IMR-90 (cell line): ENCODE measurements at regions of chr5 and their contacts with region 1.

Region 1: GRCh38 chr5:172932313-172933017 is 26.8 kb upstream of the RPL26L1 start:
- DNase-seq: peak; percentile 78
- ATAC-seq: peak; percentile 64
- H3K4me3 ChIP-seq: no peak overlapping the region
- H3K27ac ChIP-seq: peak overlapping the region; percentile 73
- H3K4me1 ChIP-seq: peaks cover 22% of the 10 kb centered on the region
- H3K27me3 ChIP-seq: no peaks in the 10 kb centered on the region
- CTCF ChIP-seq: peak; percentile 96
- POLR2A ChIP-seq: peak; percentile 78
- RAD21 ChIP-seq: peak; percentile 98

Region 2: GRCh38 chr5:172678902-172679301 is 253.6 kb before region 1 on chr5:
- CTCF ChIA-PET with region 1: no interaction called
- POLR2A ChIA-PET with region 1: no interaction called
- dilution Hi-C with region 1: no loop called
- in situ Hi-C with region 1: no loop called
- intact Hi-C with region 1: no loop called
- DNase-seq: no peak
- ATAC-seq: no peak
- H3K4me3 ChIP-seq: no peak overlapping the region
- H3K27ac ChIP-seq: no peak overlapping the region
- H3K4me1 ChIP-seq: peaks cover 2% of the 10 kb centered on the region; the same call in 1 of the 2 replicates
- H3K27me3 ChIP-seq: no peaks in the 10 kb centered on the region
- CTCF ChIP-seq: no peak
- POLR2A ChIP-seq: no peak
- RAD21 ChIP-seq: no peak

Region 3: GRCh38 chr5:172689801-172690200 is 242.7 kb before region 1 on chr5:
- CTCF ChIA-PET with region 1: no interaction called
- POLR2A ChIA-PET with region 1: no interaction called
- dilution Hi-C with region 1: no loop called
- in situ Hi-C with region 1: no loop called
- intact Hi-C with region 1: no loop called
- DNase-seq: no peak
- ATAC-seq: no peak
- H3K4me3 ChIP-seq: no peak overlapping the region
- H3K27ac ChIP-seq: no peak overlapping the region
- H3K4me1 ChIP-seq: peaks cover 5% of the 10 kb centered on the region; the same call in 1 of the 2 replicates
- H3K27me3 ChIP-seq: no peaks in the 10 kb centered on the region
- CTCF ChIP-seq: no peak
- POLR2A ChIP-seq: no peak
- RAD21 ChIP-seq: no peak

Region 4: DNA sequence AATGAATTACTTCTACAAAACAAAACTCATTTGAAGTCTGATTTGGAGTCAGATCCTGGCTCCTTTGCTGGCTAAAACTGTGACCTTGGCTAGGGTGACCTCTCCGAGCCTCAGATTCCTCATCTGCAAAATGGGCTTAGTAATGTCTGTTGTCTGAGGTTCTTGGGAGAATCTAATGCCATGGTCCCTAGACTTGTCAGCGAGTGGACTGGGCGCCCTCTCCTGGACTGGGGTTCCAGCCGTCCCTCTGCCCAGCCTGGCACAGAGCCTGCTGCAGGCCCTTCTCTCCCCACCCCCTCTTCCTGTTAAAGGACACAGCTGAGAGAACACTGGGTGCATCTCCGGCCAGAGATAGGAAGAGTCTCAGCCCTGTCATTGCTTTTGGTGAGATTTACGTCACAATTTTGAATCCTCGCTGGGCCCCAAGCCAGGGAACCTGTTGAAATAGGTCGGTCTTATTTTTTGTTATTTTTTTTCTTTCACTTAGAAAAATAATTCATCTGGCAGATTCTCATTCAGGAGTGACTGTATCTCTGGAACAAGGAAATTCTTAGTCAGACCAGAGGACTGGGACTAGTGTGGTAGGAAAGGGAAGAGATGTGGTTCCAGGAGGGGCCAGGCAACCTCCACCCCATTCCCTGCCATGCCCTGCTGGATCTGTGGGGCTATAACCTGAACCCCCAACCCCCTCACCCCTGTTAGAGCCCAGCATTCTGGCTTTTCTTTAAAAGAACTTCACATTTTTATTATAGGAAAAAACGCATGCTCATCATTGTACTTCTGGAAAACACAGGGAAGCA is 21.4 kb before region 1 on chr5:
- CTCF ChIA-PET with region 1: interaction called, 8 read pairs
- POLR2A ChIA-PET with region 1: no interaction called
- dilution Hi-C with region 1: no loop called
- in situ Hi-C with region 1: no loop called
- intact Hi-C with region 1: loop called (anchors 1 kb)
- DNase-seq: peak; percentile 96
- ATAC-seq: peak; percentile 27
- H3K4me3 ChIP-seq: no peak overlapping the region
- H3K27ac ChIP-seq: peak overlapping the region; percentile 91
- H3K4me1 ChIP-seq: peaks cover 31% of the 10 kb centered on the region
- H3K27me3 ChIP-seq: no peaks in the 10 kb centered on the region
- CTCF ChIP-seq: peak; percentile 53
- POLR2A ChIP-seq: peak; percentile 60
- RAD21 ChIP-seq: peak; percentile 63

Region 5: GRCh38 chr5:173412566-173412965 is 480.1 kb after region 1 on chr5:
- CTCF ChIA-PET with region 1: no interaction called
- POLR2A ChIA-PET with region 1: no interaction called
- dilution Hi-C with region 1: no loop called
- in situ Hi-C with region 1: no loop called
- intact Hi-C with region 1: no loop called
- DNase-seq: peak; percentile 66
- ATAC-seq: peak; percentile 77
- H3K4me3 ChIP-seq: no peak overlapping the region
- H3K27ac ChIP-seq: no peak overlapping the region
- H3K4me1 ChIP-seq: peaks cover 13% of the 10 kb centered on the region
- H3K27me3 ChIP-seq: no peaks in the 10 kb centered on the region
- CTCF ChIP-seq: no peak
- POLR2A ChIP-seq: no peak
- RAD21 ChIP-seq: no peak